ENCODE measurements at regions of chr2 and their contacts with region 1.

Region 1: DNA sequence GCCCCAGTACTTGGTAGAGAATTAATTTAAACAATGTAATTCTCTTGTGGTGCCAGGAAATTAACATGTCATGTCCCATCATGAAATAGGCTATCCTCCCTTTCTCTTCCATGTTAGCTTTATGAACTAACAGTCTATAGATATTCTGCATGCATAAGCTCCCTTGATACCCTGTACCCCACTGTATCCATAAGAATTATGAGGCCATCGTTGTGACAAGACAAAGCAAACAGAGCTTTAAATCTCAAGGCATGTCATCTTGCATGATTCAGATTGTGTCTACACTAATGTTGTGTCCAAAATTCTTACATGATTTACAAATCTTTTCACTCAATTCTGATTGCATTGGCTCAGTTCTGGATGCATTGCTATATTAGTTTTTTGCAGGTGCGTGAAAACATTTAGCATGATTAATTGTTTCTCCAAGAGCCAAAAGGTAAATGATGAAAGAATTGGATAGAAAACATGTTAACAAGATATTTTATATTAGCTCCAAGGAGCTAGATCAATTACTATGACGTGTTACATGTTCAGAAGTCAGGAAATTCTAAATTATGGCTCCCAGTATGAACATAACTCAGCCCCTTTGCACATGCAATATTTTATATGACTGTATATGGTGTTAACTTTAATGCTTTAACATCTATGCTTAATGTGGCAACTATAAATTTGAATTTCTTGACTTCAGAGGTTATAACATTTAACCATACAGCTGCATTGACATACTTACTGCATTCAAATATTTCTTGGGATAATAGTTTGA is 620.3 kb downstream of the SLC4A3 start:
- DNase-seq: no peak
- H3K4me3 ChIP-seq: no peak overlapping the region
- H3K27ac ChIP-seq: no peak overlapping the region
- H3K4me1 ChIP-seq: no peaks in the 10 kb centered on the region
- H3K27me3 ChIP-seq: no peaks in the 10 kb centered on the region
- CTCF ChIP-seq: no peak
- EP300 ChIP-seq: no peak
- POLR2A ChIP-seq: no peak

Region 2: GRCh38 chr2:220269367-220269766 is 21.6 kb after region 1 on chr2:
- intact Hi-C with region 1: loop called in 1 of 4 experiments (anchors 2 kb)
- DNase-seq: no peak
- H3K4me3 ChIP-seq: no peak overlapping the region
- H3K27ac ChIP-seq: no peak overlapping the region
- H3K4me1 ChIP-seq: no peaks in the 10 kb centered on the region
- H3K27me3 ChIP-seq: no peaks in the 10 kb centered on the region
- CTCF ChIP-seq: no peak
- EP300 ChIP-seq: no peak
- POLR2A ChIP-seq: no peak